Heart left ventricle (tissue), 16 donors: ENCODE measurements at regions of chr3 and their contacts with region 1.

Region 1: GRCh38 chr3:29144807-29145206 is 136.1 kb upstream of the RBMS3 start:
- DNase-seq: peak in 4 of 5 donors; percentile 35 to 56 (median 44)
- ATAC-seq: peak; percentile 66 to 81 (median 78)
- H3K4me3 ChIP-seq: no peak overlapping the region
- H3K27ac ChIP-seq: no peak overlapping the region
- H3K4me1 ChIP-seq: peaks cover 0 to 32% (median 6%) of the 10 kb centered on the region in 12 donors
- H3K27me3 ChIP-seq: no peaks in the 10 kb centered on the region
- CTCF ChIP-seq: peak in 10 of 12 donors; percentile 21 to 62 (median 50)
- POLR2A ChIP-seq: no peak

Region 2: DNA sequence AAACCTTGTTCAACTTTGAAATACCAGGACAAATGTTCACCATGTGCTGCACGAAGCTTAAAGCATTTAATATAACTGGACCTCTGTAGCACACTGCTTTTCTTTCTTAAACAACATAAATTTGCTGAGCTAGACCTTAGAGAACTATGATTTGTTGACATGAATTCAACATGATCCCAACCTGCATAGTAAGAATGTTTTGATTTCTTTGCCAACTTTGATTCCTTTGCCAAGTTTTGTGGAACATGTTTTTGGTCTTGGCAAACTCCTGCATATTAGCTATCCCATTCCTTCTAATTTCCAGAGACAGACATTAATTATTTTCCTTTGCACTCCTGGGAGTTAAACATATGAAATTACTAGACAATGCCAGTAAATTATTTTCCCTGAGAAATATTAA is 61.1 kb before region 1 on chr3:
- intact Hi-C with region 1: no loop called
- DNase-seq: no peak
- ATAC-seq: no peak
- H3K4me3 ChIP-seq: no peak overlapping the region
- H3K27ac ChIP-seq: no peak overlapping the region
- H3K4me1 ChIP-seq: no peaks in the 10 kb centered on the region
- H3K27me3 ChIP-seq: no peaks in the 10 kb centered on the region
- CTCF ChIP-seq: no peak
- POLR2A ChIP-seq: no peak

Region 3: DNA sequence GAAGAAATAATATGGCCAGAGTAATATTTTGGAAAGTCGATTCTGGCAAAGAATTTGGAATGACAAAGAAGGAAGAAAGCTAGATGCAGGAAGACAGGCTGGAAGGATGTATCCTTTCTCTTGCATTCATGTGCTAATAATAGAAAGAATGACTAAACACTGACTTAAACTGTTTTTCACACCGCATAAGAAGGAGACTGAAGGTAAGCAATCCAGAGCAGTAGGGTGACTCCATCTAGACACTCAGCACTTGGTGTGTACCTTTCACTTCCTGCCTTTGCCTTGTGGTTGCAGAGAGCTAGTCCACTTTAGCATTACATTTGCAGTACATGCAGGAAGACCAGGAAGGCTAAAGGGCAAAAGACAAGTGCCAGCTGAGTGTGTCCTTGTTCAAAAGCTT is 370.6 kb after region 1 on chr3:
- intact Hi-C with region 1: loop called in 1 of 10 experiments (anchors 10 kb)
- DNase-seq: no peak
- ATAC-seq: peak in 2 of 4 donors; percentile 39 to 58
- H3K4me3 ChIP-seq: no peak overlapping the region
- H3K27ac ChIP-seq: no peak overlapping the region
- H3K4me1 ChIP-seq: peaks cover 10 to 70% (median 34%) of the 10 kb centered on the region in 12 donors
- H3K27me3 ChIP-seq: no peaks in the 10 kb centered on the region
- CTCF ChIP-seq: no peak
- POLR2A ChIP-seq: no peak

Region 4: GRCh38 chr3:29537889-29538609 is 393.2 kb after region 1 on chr3:
- intact Hi-C with region 1: loop called in 1 of 10 experiments (anchors 10 kb)
- DNase-seq: no peak
- ATAC-seq: peak in 1 of 4 donors; percentile 48
- H3K4me3 ChIP-seq: no peak overlapping the region
- H3K27ac ChIP-seq: peak overlapping the region in 6 of 12 donors; percentile 0 to 52 (median 28)
- H3K4me1 ChIP-seq: peaks cover 0 to 48% (median 22%) of the 10 kb centered on the region in 12 donors
- H3K27me3 ChIP-seq: no peaks in the 10 kb centered on the region
- CTCF ChIP-seq: no peak
- POLR2A ChIP-seq: no peak